OCI-LY7 (cell line): ENCODE measurements at regions of chr6 and their contacts with region 1.

Region 1: GRCh38 chr6:42043787-42044475 is 6.4 kb upstream of the TAF8 start:
- DNase-seq: peak; percentile 90
- H3K4me3 ChIP-seq: peak overlapping the region; percentile 20
- H3K27ac ChIP-seq: peak overlapping the region; percentile 68
- H3K4me1 ChIP-seq: peaks cover 83% of the 10 kb centered on the region
- CTCF ChIP-seq: peak; percentile 97

Region 2: DNA sequence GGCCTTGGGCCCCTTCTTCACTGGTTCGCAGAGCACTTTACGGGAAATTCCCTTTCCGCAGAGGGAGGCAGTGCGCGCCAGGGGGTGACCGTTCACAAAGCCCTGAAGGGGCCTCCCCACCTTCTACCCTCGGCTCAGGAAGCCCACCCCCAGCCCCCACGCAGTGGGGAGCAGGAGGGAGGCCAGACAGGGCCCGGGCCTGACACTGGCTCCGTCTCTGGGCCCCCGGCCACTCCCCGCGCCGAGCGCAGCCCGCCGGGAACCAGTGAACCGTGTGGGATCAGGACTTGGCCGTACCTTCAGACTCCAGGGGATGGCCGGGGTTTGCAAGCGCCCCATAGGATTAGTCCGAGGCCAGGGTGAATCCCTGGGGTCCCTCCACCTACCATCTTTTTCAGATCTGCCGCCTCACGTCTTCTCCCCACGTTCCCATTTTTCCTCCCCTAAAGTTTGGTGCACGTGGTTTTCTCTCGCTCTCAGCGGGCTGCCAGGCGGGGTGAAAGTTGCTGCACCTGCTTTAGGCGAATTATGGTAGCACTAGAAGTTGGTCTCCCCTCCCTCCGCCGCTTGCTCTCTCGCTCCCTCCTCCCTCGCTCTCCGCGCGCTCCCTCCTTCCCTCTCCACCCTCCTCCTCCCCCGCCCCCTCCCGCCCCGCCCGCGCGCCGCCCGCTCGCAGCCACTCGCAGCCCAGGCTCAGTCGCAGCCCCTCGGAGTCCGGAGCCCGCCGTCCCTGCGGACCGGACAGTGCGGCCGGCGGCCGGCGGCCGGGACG is 498.0 kb before region 1 on chr6 and contains the start of gene FOXP4:
- CTCF ChIA-PET with region 1: no interaction called
- POLR2A ChIA-PET with region 1: no interaction called
- intact Hi-C with region 1: loop called (anchors 10 kb)
- DNase-seq: peak; percentile 94
- H3K4me3 ChIP-seq: peak within 1 kb of the TSS; percentile 94
- H3K27ac ChIP-seq: peak within 1 kb of the TSS; percentile 61
- H3K4me1 ChIP-seq: peaks cover 28% of the 10 kb centered on the region
- CTCF ChIP-seq: no peak
- total RNA-seq, gene FOXP4: 5.1 and 6.3 TPM in 2 replicates

Region 3: GRCh38 chr6:41779793-41780545 is 264.0 kb before region 1 on chr6 and contains the start of gene FRS3:
- CTCF ChIA-PET with region 1: no interaction called
- POLR2A ChIA-PET with region 1: interaction called, 3 read pairs
- intact Hi-C with region 1: loop called (anchors 1 kb)
- DNase-seq: peak; percentile 97
- H3K4me3 ChIP-seq: peak within 1 kb of the TSS; percentile 83
- H3K27ac ChIP-seq: no peak within 1 kb of the TSS
- H3K4me1 ChIP-seq: peaks cover 28% of the 10 kb centered on the region
- CTCF ChIP-seq: peak; percentile 88
- total RNA-seq, gene FRS3: 5.6 and 8.2 TPM in 2 replicates

Region 4: GRCh38 chr6:41846666-41847237 is 197.2 kb before region 1 on chr6:
- CTCF ChIA-PET with region 1: interaction called, 5 read pairs
- POLR2A ChIA-PET with region 1: interaction called, 4 read pairs
- intact Hi-C with region 1: loop called (anchors 1 kb)
- DNase-seq: peak; percentile 60
- H3K4me3 ChIP-seq: no peak overlapping the region
- H3K27ac ChIP-seq: no peak overlapping the region
- H3K4me1 ChIP-seq: peaks cover 7% of the 10 kb centered on the region
- CTCF ChIP-seq: peak; percentile 94

Region 5: DNA sequence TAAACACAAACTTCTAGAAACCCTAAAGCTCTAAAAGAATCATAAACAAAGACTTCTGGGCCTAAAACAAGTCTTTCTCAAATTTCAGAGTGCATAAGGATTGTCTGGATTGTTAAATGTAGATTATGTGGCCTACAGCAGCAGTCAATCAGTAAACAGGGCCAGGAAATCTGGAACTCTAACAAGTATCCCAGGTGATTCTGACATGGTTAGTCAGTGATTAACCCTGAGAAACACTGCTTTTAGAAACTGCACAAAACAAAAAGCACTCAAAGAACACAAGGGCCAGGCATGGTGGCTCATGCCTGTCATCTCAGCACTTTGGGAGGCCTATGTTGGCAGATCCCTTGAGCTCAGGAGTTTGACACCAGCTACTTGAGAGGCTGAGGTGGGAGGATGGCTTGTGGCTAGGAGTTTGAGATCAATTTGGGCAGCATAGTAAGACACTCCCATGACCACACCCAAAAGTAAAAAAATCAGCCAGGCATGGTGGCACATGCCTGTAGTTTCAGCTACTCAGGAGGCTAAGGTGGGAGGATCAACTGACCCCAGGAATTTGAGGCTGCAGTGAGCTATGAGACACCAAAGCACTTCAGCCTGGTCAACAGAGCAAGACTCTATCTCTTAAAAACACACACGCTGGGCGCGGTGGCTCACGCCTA is 128.9 kb before region 1 on chr6:
- CTCF ChIA-PET with region 1: no interaction called
- POLR2A ChIA-PET with region 1: no interaction called
- intact Hi-C with region 1: no loop called
- DNase-seq: no peak
- H3K4me3 ChIP-seq: no peak overlapping the region
- H3K27ac ChIP-seq: no peak overlapping the region
- H3K4me1 ChIP-seq: peaks cover 10% of the 10 kb centered on the region
- CTCF ChIP-seq: no peak

Region 6: GRCh38 chr6:41936073-41936837 is 107.7 kb before region 1 on chr6:
- CTCF ChIA-PET with region 1: interaction called, 11 read pairs
- POLR2A ChIA-PET with region 1: interaction called, 8 read pairs
- intact Hi-C with region 1: loop called (anchors 1 kb)
- DNase-seq: peak; percentile 81
- H3K4me3 ChIP-seq: peak overlapping the region; percentile 93
- H3K27ac ChIP-seq: peak overlapping the region; percentile 82
- H3K4me1 ChIP-seq: peaks cover 66% of the 10 kb centered on the region
- CTCF ChIP-seq: peak; percentile 86

Region 7: GRCh38 chr6:42028234-42029061 is 15.5 kb before region 1 on chr6:
- CTCF ChIA-PET with region 1: interaction called, 7 read pairs
- POLR2A ChIA-PET with region 1: interaction called, 30 read pairs
- intact Hi-C with region 1: no loop called
- DNase-seq: no peak
- H3K4me3 ChIP-seq: no peak overlapping the region
- H3K27ac ChIP-seq: peak overlapping the region; percentile 98
- H3K4me1 ChIP-seq: peaks cover 100% of the 10 kb centered on the region
- CTCF ChIP-seq: no peak